Right ventricle myocardium superior (tissue), 1 donor: ENCODE measurements at regions of chr3 and their contacts with region 1.

Region 1: GRCh38 chr3:119279101-119279554 is 15.1 kb upstream of the ARHGAP31 start:
- DNase-seq: peak; percentile 85
- ATAC-seq: peak; percentile 87

Region 2: GRCh38 chr3:119352849-119353502 is 73.8 kb after region 1 on chr3:
- intact Hi-C with region 1: loop called (anchors 10 kb)
- DNase-seq: no peak
- ATAC-seq: peak; percentile 73